Activated naive CD4-positive, alpha-beta T cell treated with anti-CD3 and anti-CD28 coated beads, Interleukin-2, amount 10 ng/mL, durations not matched to agents 7 days and 5 days (primary cell): ENCODE measurements at regions of chr5 and their contacts with region 1.

Region 1: GRCh38 chr5:95822542-95823181 is at the start of gene GLRX:
- DNase-seq: peak; percentile 79
- H3K4me3 Mint-ChIP-seq: peak within 1 kb of the TSS; percentile 96
- H3K27ac Mint-ChIP-seq: peak within 1 kb of the TSS; percentile 97
- H3K4me1 Mint-ChIP-seq: peaks cover 72% of the 10 kb centered on the region
- H3K27me3 Mint-ChIP-seq: no peaks in the 10 kb centered on the region

Region 2: GRCh38 chr5:95835682-95836385 is 13.2 kb after region 1 on chr5:
- CTCF ChIA-PET with region 1: interaction called, 15 read pairs
- DNase-seq: peak; percentile 40
- H3K4me3 Mint-ChIP-seq: peak overlapping the region; percentile 75
- H3K27ac Mint-ChIP-seq: peak overlapping the region; percentile 90
- H3K4me1 Mint-ChIP-seq: peaks cover 54% of the 10 kb centered on the region
- H3K27me3 Mint-ChIP-seq: no peaks in the 10 kb centered on the region

Region 3: DNA sequence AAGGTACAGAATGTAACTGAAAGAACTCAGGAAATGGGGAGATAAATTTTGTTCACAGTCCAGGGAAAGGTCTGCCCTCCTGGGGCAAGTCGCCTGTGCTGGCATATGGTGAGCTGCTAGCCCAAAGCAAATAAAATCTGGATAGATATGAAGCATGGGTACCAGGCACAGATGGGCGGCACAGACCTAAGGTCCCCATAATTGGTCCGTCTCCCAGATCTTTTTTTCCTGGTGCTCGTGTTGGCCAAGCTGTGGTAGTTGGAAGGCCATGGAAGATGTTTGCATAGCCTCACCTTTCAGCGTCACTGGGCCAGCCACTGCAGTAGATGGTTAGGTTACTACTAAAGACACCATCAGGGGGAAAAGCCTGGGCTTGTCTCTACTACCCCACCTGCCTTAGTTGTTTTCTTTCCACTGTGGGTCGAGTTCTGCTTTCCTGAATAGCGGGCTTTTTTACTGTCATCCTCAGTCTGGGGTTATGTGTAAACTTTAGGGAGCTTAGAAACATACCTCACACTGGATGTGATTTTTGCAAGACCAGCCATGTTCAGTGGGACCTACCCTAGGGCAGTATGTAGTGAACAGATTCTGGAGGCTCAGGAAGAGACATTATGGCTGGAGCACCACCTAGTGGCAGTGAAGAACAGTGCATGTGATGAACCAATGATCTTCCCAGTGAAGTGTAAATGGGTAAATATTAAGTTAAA is 24.0 kb after region 1 on chr5:
- CTCF ChIA-PET with region 1: interaction called, 18 read pairs
- DNase-seq: peak; percentile 76
- H3K4me3 Mint-ChIP-seq: no peak overlapping the region
- H3K27ac Mint-ChIP-seq: no peak overlapping the region
- H3K4me1 Mint-ChIP-seq: peaks cover 21% of the 10 kb centered on the region
- H3K27me3 Mint-ChIP-seq: peaks cover 15% of the 10 kb centered on the region